CD4-positive, alpha-beta memory T cell (primary cell): ENCODE measurements at regions of chr12 and their contacts with region 1.

Region 1: GRCh38 chr12:15563663-15564062 is 225.5 kb downstream of the EPS8 start:
- DNase-seq: peak in 4 of 5 donors; percentile 33 to 41 (median 34)
- H3K4me3 ChIP-seq: peak overlapping the region; percentile 7 to 33
- H3K4me3 Mint-ChIP-seq: peak overlapping the region; percentile 58 to 83 (median 78)
- H3K27ac ChIP-seq: peak overlapping the region; percentile 43
- H3K27ac Mint-ChIP-seq: peak overlapping the region; percentile 80 to 93 (median 90)
- H3K4me1 ChIP-seq: peaks cover 54% of the 10 kb centered on the region
- H3K4me1 Mint-ChIP-seq: peaks cover 28 to 44% (median 39%) of the 10 kb centered on the region in 4 donors
- H3K27me3 ChIP-seq: no peaks in the 10 kb centered on the region
- H3K27me3 Mint-ChIP-seq: no peaks in the 10 kb centered on the region

Region 2: GRCh38 chr12:15546102-15546701 is 17.5 kb before region 1 on chr12:
- CTCF ChIA-PET with region 1: interaction called, 71 read pairs
- POLR2A ChIA-PET with region 1: interaction called, 85 read pairs
- intact Hi-C with region 1: loop called (anchors 1 kb)
- DNase-seq: peak; percentile 65 to 74 (median 68)
- H3K4me3 ChIP-seq: no peak overlapping the region
- H3K4me3 Mint-ChIP-seq: peak overlapping the region; percentile 22 to 80 (median 59)
- H3K27ac ChIP-seq: peak overlapping the region; percentile 30
- H3K27ac Mint-ChIP-seq: peak overlapping the region; percentile 85 to 98 (median 88)
- H3K4me1 ChIP-seq: peaks cover 50% of the 10 kb centered on the region
- H3K4me1 Mint-ChIP-seq: peaks cover 35 to 62% (median 42%) of the 10 kb centered on the region in 4 donors
- H3K27me3 ChIP-seq: no peaks in the 10 kb centered on the region
- H3K27me3 Mint-ChIP-seq: no peaks in the 10 kb centered on the region

Region 3: GRCh38 chr12:15575671-15576541 is 12.2 kb after region 1 on chr12:
- CTCF ChIA-PET with region 1: interaction called, 9 read pairs
- POLR2A ChIA-PET with region 1: interaction called, 14 read pairs
- intact Hi-C with region 1: loop called (anchors 1 kb)
- DNase-seq: no peak
- H3K4me3 ChIP-seq: no peak overlapping the region
- H3K4me3 Mint-ChIP-seq: peak overlapping the region in 2 of 8 donors; percentile 2 to 27
- H3K27ac ChIP-seq: no peak overlapping the region
- H3K27ac Mint-ChIP-seq: peak overlapping the region in 1 of 7 donors; percentile 30
- H3K4me1 ChIP-seq: peaks cover 9% of the 10 kb centered on the region
- H3K4me1 Mint-ChIP-seq: peaks cover 7 to 14% (median 12%) of the 10 kb centered on the region in 4 donors
- H3K27me3 ChIP-seq: no peaks in the 10 kb centered on the region
- H3K27me3 Mint-ChIP-seq: no peaks in the 10 kb centered on the region